ENCODE measurements at regions of chr3 and their contacts with region 1.

Region 1: DNA sequence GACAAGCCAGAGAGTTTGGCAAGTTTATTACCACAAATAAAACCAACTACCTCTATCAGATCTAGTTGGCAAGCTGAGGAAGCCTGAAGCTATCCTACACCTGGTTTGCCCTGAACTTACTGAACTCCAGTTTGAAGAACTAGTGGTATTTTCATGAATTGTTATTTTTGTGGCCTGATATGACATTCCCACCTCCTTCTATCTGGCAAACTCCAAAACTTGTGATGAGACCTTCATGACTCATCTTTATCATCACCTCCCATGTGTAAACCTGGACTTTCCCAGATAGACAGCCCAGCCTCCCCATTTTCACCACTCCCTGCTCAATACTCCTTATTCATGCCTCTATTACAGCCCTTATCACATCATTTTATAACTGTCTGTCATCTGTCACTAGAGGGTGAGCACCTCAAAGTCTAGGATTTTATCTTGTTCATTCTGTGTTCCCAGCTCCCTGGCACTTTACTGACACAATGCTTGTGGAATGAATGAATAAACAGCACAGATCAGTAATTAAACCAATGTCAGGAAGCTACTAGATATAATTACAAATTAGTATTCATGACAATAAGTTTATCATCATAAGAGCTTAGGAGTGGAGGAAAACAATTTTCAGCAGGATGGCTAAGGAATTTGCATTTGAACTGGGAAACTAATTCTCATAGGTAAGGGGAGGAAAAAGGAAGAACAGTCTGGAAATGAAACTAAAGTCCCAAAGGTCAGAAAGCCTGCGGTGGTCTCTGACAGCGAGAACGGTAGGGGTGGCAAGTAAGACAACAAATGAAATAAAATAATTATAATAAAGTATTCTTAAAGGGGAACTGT is 13.2 kb upstream of the TRANK1 start:
- DNase-seq: peak in 2 of 14 experiments; percentile 57 to 66
- ATAC-seq: no peak
- H3K4me3 ChIP-seq: no peak overlapping the region
- H3K4me3 Mint-ChIP-seq: no peak overlapping the region
- H3K27ac ChIP-seq: no peak overlapping the region
- H3K27ac Mint-ChIP-seq: peak overlapping the region; percentile 10
- H3K4me1 ChIP-seq: peaks cover 5% of the 10 kb centered on the region
- H3K4me1 Mint-ChIP-seq: peaks cover 5% of the 10 kb centered on the region
- H3K27me3 ChIP-seq: no peaks in the 10 kb centered on the region
- H3K27me3 Mint-ChIP-seq: no peaks in the 10 kb centered on the region
- CTCF ChIP-seq: no peak

Region 2: DNA sequence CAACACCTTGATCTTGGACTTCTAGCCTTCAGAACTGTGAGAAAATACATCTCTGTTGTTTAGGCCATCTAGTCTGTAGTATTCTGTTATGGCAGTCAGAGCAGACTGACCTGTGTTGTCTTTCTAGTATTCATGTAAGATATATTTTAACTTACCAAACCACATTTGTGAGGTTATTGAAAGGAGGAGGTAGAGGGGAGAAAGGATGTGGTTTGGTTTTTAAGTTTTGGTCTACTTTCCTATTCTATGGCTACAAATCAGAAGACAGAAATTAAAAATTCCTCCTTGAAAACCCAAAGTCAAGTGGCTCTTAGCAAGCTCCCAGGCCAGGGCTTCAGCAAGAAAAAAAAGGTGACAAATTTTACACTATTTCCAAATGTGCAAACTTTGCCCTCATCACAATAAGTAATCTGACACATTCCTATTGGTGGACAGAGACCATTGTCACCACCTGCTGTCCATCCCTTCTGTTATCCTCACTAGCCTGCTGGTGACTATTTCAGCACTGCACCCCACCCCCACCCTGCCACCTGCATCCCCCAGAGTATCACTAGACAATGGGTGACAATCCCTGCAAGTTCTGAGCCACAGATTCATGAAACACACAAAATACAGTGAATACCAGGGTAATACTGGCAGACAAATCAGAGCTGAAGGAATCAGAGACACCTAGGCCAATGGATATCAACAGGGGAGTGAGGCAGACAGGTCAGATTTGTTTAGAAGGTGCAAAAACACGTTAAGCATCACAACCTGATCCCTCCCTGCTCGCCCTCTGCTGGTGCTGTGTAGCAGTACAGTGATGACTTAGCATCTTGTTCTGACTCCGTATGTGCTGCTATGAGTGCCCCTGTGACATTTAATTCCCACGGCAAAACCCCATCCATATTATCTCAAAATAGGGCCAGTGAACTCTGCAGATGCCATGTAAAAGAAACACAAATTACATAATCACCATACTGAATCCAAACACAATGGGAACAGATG is 114.7 kb before region 1 on chr3:
- CTCF ChIA-PET with region 1: no interaction called
- POLR2A ChIA-PET with region 1: no interaction called
- intact Hi-C with region 1: loop called (anchors 1 to 2 kb)
- DNase-seq: peak in 13 of 14 experiments; percentile 11 to 67 (median 25)
- ATAC-seq: peak; percentile 89
- H3K4me3 ChIP-seq: no peak overlapping the region
- H3K4me3 Mint-ChIP-seq: no peak overlapping the region
- H3K27ac ChIP-seq: no peak overlapping the region
- H3K27ac Mint-ChIP-seq: peak overlapping the region; percentile 5
- H3K4me1 ChIP-seq: peaks cover 17% of the 10 kb centered on the region
- H3K4me1 Mint-ChIP-seq: peaks cover 41% of the 10 kb centered on the region
- H3K27me3 ChIP-seq: no peaks in the 10 kb centered on the region
- H3K27me3 Mint-ChIP-seq: no peaks in the 10 kb centered on the region
- CTCF ChIP-seq: peak; percentile 60

Region 3: DNA sequence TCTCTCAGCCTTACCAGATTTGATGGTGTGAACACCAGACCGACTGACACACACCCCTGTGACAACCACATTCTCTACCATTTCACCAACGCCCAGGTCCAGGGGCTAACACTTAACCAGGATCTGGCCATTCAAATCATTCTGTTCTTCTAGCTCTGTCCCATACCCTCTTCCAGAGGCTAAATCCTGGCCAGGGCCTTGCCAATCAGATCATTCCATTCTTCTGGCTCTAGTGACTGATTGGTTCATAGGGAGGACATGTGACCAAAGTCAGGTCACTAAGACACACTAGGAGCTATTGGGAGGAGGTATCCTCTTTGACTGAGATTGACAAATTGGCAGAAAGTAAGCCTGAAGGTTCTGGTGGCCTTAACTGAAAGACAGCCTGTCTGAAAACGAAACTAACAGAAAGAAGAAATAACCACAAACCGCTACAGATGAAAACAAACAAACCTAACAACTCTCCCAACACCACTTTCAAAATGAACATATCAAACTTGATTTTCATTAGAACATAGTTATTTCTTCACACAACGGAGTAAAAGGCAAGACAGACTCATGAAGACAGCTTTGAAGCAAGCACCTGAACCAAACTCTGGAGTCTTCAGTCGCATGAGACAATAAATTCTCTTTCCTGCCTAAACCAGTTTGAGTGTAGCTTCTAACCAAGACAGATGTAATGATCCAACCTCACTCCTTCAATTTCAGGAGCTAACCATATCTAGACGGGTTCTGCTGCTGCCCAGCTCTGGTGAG is 81.7 kb before region 1 on chr3:
- CTCF ChIA-PET with region 1: interaction called, 16 read pairs
- POLR2A ChIA-PET with region 1: interaction called, 12 read pairs
- intact Hi-C with region 1: loop called in 1 of 2 experiments (anchors 1 kb)
- DNase-seq: peak in 6 of 14 experiments; percentile 6 to 90 (median 42)
- ATAC-seq: peak; percentile 92
- H3K4me3 ChIP-seq: peak overlapping the region; percentile 40
- H3K4me3 Mint-ChIP-seq: peak overlapping the region; percentile 69
- H3K27ac ChIP-seq: peak overlapping the region; percentile 77 to 80
- H3K27ac Mint-ChIP-seq: peak overlapping the region; percentile 96
- H3K4me1 ChIP-seq: peaks cover 23% of the 10 kb centered on the region
- H3K4me1 Mint-ChIP-seq: peaks cover 72% of the 10 kb centered on the region
- H3K27me3 ChIP-seq: no peaks in the 10 kb centered on the region
- H3K27me3 Mint-ChIP-seq: no peaks in the 10 kb centered on the region
- CTCF ChIP-seq: no peak

Region 4: DNA sequence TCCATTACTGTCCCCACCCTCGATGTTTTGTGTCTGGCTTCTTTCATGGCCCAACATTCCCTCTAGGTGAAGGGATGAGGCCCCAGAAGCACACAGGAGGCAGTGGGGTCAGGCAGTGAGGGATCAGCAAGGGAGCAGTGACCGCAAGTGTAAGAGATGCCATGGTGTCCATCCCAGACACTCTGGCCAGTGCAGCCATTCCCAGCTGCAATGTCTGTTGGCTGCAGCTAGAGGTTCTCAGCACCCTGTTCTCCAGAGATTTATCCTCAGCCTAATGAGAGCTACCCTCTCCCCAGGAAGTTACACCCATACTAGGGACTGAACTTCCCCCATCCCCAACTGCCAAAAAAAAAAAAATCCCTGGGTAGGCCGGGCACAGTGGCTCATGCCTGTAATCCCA is 53.4 kb before region 1 on chr3:
- CTCF ChIA-PET with region 1: interaction called, 17 read pairs
- POLR2A ChIA-PET with region 1: interaction called, 16 read pairs
- intact Hi-C with region 1: loop called (anchors 2 to 5 kb)
- DNase-seq: no peak
- ATAC-seq: no peak
- H3K4me3 ChIP-seq: no peak overlapping the region
- H3K4me3 Mint-ChIP-seq: peak overlapping the region; percentile 52
- H3K27ac ChIP-seq: peak overlapping the region in 1 of 2 donors; percentile 17
- H3K27ac Mint-ChIP-seq: peak overlapping the region; percentile 93
- H3K4me1 ChIP-seq: peaks cover 75% of the 10 kb centered on the region
- H3K4me1 Mint-ChIP-seq: peaks cover 79% of the 10 kb centered on the region
- H3K27me3 ChIP-seq: no peaks in the 10 kb centered on the region
- H3K27me3 Mint-ChIP-seq: no peaks in the 10 kb centered on the region
- CTCF ChIP-seq: no peak

Region 5: DNA sequence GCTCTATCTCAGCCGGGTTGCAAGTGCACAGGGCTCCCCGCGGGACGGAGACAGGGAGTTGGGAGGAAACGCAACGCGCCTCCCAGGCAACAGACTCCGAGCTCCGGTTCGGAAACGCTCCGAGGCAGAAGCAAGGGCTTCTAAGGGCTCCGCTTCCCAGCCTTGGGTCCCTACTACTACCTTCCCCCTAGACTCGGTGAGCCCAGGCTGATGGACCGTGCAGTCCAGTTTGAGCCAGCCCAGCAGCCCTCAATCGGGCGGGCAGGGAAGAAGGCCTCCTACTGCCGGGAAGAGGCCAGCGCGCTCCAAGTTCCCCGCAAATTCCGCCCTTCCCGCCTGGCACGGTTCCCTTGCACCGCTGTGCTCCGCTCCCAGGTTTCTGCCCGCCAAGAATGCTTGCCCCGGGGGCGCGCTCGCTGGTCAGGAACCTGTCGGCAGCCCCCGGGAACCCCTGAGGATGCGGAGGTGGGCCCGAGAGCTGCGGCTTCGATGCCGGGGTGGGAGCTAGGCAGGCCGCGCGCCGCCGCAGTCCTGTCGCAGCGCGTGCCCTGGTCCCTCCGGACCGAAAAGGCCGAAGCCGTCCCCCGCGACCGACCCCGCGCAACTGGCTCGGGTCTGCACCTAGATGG is 13.9 kb before region 1 on chr3:
- CTCF ChIA-PET with region 1: interaction called, 19 read pairs
- POLR2A ChIA-PET with region 1: interaction called, 24 read pairs
- intact Hi-C with region 1: loop called in 1 of 2 experiments (anchors 1 kb)
- DNase-seq: peak; percentile 2 to 55 (median 22)
- ATAC-seq: peak; percentile 35
- H3K4me3 ChIP-seq: peak overlapping the region; percentile 79
- H3K4me3 Mint-ChIP-seq: peak overlapping the region; percentile 89
- H3K27ac ChIP-seq: peak overlapping the region in 1 of 2 donors; percentile 61
- H3K27ac Mint-ChIP-seq: peak overlapping the region; percentile 73
- H3K4me1 ChIP-seq: peaks cover 22% of the 10 kb centered on the region
- H3K4me1 Mint-ChIP-seq: peaks cover 21% of the 10 kb centered on the region
- H3K27me3 ChIP-seq: no peaks in the 10 kb centered on the region
- H3K27me3 Mint-ChIP-seq: no peaks in the 10 kb centered on the region
- CTCF ChIP-seq: no peak

Measured in CD4-positive, alpha-beta T cell (primary cell).